Right cardiac atrium (tissue), 5 donors: ENCODE measurements at regions of chr1 and their contacts with region 1.

Region 1: GRCh38 chr1:4652631-4653327 is 1.6 kb upstream of the AJAP1 start:
- DNase-seq: peak; percentile 56 to 83 (median 78)
- ATAC-seq: peak; percentile 62 to 84
- H3K4me3 ChIP-seq: no peak overlapping the region
- H3K27ac ChIP-seq: no peak overlapping the region
- H3K4me1 ChIP-seq: no peaks in the 10 kb centered on the region
- H3K27me3 ChIP-seq: peaks cover 2% of the 10 kb centered on the region

Region 2: GRCh38 chr1:4713669-4714068 is 60.9 kb after region 1 on chr1:
- intact Hi-C with region 1: no loop called
- DNase-seq: peak in 1 of 3 donors; percentile 5
- ATAC-seq: no peak
- H3K4me3 ChIP-seq: no peak overlapping the region
- H3K27ac ChIP-seq: no peak overlapping the region
- H3K4me1 ChIP-seq: no peaks in the 10 kb centered on the region
- H3K27me3 ChIP-seq: no peaks in the 10 kb centered on the region

Region 3: GRCh38 chr1:5620990-5621389 is 968.2 kb after region 1 on chr1:
- intact Hi-C with region 1: loop called in 1 of 4 experiments (anchors 10 kb)
- DNase-seq: no peak
- ATAC-seq: peak; percentile 25 to 61
- H3K4me3 ChIP-seq: no peak overlapping the region
- H3K27ac ChIP-seq: no peak overlapping the region
- H3K4me1 ChIP-seq: no peaks in the 10 kb centered on the region
- H3K27me3 ChIP-seq: no peaks in the 10 kb centered on the region

Region 4: DNA sequence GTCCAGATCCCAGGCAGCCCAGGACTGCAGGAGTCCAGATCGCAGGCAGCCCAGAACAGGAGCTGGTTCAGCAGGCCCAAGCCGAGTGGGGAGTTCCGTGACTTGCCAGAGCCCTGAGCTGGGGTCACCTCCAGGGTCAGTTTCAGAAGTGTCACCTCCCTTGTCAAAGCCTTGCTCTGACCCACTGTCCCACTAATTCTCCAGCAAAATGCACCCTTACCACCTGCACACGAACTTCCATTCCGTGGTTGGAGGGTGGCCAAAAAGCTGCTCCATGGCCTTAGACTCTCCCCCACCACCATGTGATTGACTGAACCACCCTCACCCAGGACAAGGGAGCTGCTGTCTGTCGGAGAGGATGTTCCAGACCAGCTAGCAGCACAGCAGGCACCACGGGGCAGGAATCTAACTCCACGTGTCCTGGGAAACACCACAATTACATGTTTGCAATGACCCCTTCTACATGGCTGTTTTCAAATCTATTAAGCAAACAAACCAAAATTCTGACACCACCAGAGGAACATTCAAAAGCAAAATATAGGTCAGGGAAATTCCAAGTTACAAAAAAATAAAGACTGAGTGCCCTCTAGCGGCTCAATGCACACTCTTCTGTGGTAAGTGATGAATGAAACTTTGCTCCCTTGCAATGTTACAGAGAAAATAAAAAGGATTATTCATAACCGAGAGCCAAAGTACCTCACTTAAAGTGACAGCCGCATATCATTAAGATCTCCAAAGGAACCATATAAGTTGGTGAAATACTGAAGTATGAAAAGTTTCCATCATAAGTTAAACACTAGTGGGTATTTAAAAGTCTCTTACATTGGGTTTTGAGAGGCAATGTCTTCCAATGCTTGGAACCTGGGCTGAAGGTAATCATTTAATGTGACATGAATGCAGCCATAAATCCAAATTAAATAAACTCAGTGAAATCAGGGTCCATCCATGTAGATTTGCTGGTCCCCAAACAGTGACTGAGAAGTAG is 1263.1 kb after region 1 on chr1:
- intact Hi-C with region 1: loop called in 1 of 4 experiments (anchors 10 kb)
- DNase-seq: no peak
- ATAC-seq: peak; percentile 39 to 44
- H3K4me3 ChIP-seq: no peak overlapping the region
- H3K27ac ChIP-seq: no peak overlapping the region
- H3K4me1 ChIP-seq: no peaks in the 10 kb centered on the region
- H3K27me3 ChIP-seq: no peaks in the 10 kb centered on the region

Region 5: GRCh38 chr1:5975133-5975880 is 1322.5 kb after region 1 on chr1:
- intact Hi-C with region 1: loop called in 1 of 4 experiments (anchors 10 kb)
- DNase-seq: peak in 2 of 3 donors; percentile 70 to 75
- ATAC-seq: peak; percentile 68 to 73
- H3K4me3 ChIP-seq: no peak overlapping the region
- H3K27ac ChIP-seq: no peak overlapping the region
- H3K4me1 ChIP-seq: no peaks in the 10 kb centered on the region
- H3K27me3 ChIP-seq: no peaks in the 10 kb centered on the region